ENCODE measurements at regions of chr9 and their contacts with region 1.

Region 1: DNA sequence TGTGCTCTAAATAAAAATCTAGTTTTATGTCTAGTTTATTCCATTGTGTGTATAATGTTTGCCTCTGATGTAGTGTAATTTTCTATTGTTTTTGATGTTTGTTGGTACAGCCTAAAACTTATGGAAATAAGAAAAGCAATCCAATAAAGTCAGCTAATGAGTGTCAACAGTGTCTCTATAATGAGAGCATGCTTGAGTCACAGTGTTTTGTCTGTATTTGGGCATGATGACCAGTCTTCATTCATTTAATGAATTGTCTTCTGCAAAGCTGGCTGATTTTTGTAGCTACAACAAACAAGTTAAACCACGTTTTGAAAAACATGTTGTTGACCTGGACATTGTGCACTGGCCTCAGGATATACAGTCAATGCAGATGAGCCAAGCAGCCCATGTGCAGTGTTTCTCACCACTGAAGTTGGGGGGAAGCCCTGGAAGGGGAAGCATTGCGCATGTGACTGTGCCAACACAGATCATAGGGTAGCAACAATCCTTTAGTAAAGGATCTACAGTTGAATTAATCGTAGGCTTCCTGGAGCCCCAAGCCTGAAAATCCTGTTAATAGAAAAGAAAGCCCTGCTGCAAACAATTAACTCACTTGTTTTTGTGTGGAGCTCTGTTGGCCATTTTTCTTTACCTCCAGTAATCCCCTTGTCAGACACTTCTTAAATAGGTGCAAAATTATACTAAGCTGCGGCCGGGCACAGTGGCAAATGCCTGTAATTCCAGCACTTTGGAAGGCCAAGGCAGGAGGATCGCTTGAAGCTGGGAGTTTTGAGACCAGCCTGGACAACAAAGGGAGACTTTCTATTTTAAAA is 88.0 kb downstream of the INIP start:
- DNase-seq: no peak
- H3K4me3 ChIP-seq: no peak overlapping the region
- H3K27ac ChIP-seq: no peak overlapping the region
- H3K4me1 ChIP-seq: no peaks in the 10 kb centered on the region
- H3K27me3 ChIP-seq: no peaks in the 10 kb centered on the region
- CTCF ChIP-seq: no peak

Region 2: DNA sequence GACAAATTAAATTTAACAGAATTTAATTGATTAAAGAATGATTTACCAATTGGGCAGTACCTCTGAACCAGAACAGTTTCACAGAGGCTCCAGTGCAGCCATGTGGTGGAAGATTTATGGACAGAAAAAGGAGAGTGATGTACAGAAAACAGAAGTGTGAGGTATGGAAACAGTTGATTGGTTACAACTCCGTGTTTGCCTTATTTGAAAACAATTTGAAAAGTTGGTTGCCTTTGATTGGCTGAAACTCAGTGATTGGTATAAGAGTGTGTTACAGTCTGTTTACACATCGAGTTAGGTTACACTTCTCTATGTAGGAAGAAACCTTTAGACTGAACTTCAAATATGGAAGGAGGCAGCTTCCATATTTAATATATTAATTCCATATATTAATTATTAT is 113.1 kb before region 1 on chr9:
- CTCF ChIA-PET with region 1: no interaction called
- dilution Hi-C with region 1: no loop called
- in situ Hi-C with region 1: no loop called
- intact Hi-C with region 1: loop called (anchors 5 kb)
- DNase-seq: no peak
- H3K4me3 ChIP-seq: no peak overlapping the region
- H3K27ac ChIP-seq: no peak overlapping the region
- H3K4me1 ChIP-seq: no peaks in the 10 kb centered on the region
- H3K27me3 ChIP-seq: no peaks in the 10 kb centered on the region
- CTCF ChIP-seq: no peak

Region 3: GRCh38 chr9:112670991-112671625 is 41.2 kb after region 1 on chr9:
- CTCF ChIA-PET with region 1: no interaction called
- dilution Hi-C with region 1: no loop called
- in situ Hi-C with region 1: no loop called
- intact Hi-C with region 1: no loop called
- DNase-seq: no peak
- H3K4me3 ChIP-seq: no peak overlapping the region
- H3K27ac ChIP-seq: no peak overlapping the region
- H3K4me1 ChIP-seq: no peaks in the 10 kb centered on the region
- H3K27me3 ChIP-seq: no peaks in the 10 kb centered on the region
- CTCF ChIP-seq: no peak

Measured in mammary epithelial cell (primary cell).